Activated CD4-positive, alpha-beta T cell treated with anti-CD3 and anti-CD28 coated beads, Interleukin-2, amount 10 ng/mL, durations not matched to agents 24 days and 14 days (primary cell): ENCODE measurements at regions of chr2 and their contacts with region 1.

Region 1: GRCh38 chr2:74553892-74554645 is at the start of gene LOXL3:
- DNase-seq: peak; percentile 94
- H3K4me3 Mint-ChIP-seq: peak within 1 kb of the TSS; percentile 96
- H3K27ac Mint-ChIP-seq: peak within 1 kb of the TSS; percentile 95
- H3K4me1 Mint-ChIP-seq: peaks cover 38% of the 10 kb centered on the region
- H3K27me3 Mint-ChIP-seq: peaks cover 9% of the 10 kb centered on the region
- total RNA-seq, gene LOXL3: 1.5 and 1.7 TPM in 2 replicates

Region 2: GRCh38 chr2:74130163-74130995 is 423.7 kb before region 1 on chr2:
- intact Hi-C with region 1: no loop called
- DNase-seq: no peak
- H3K4me3 Mint-ChIP-seq: no peak overlapping the region
- H3K27ac Mint-ChIP-seq: no peak overlapping the region
- H3K4me1 Mint-ChIP-seq: no peaks in the 10 kb centered on the region
- H3K27me3 Mint-ChIP-seq: peaks cover 9% of the 10 kb centered on the region

Region 3: DNA sequence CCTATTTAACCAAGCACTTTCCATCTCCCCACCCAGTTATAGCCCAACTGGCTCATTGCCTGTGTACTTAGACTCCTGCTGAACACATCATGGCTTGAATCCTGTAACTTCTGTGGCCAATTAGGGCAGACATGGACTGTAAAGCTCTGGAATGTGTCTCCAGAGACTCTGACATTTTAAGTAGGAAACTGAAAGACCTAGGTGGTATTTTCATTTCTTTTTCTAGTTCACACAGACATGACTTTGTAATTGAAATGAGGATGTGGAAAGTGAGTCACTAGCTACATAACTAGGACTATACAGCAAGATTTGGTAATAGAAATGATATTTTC is 12.7 kb after region 1 on chr2:
- intact Hi-C with region 1: loop called (anchors 1 kb)
- DNase-seq: no peak
- H3K4me3 Mint-ChIP-seq: peak overlapping the region; percentile 70
- H3K27ac Mint-ChIP-seq: peak overlapping the region; percentile 83
- H3K4me1 Mint-ChIP-seq: peaks cover 40% of the 10 kb centered on the region
- H3K27me3 Mint-ChIP-seq: no peaks in the 10 kb centered on the region

Region 4: GRCh38 chr2:74587664-74588277 is 33.7 kb after region 1 on chr2:
- intact Hi-C with region 1: loop called (anchors 1 kb)
- DNase-seq: peak; percentile 90
- H3K4me3 Mint-ChIP-seq: no peak overlapping the region
- H3K27ac Mint-ChIP-seq: peak overlapping the region; percentile 49
- H3K4me1 Mint-ChIP-seq: peaks cover 27% of the 10 kb centered on the region
- H3K27me3 Mint-ChIP-seq: peaks cover 22% of the 10 kb centered on the region